ENCODE measurements at regions of chr1 and their contacts with region 1.

Region 1: DNA sequence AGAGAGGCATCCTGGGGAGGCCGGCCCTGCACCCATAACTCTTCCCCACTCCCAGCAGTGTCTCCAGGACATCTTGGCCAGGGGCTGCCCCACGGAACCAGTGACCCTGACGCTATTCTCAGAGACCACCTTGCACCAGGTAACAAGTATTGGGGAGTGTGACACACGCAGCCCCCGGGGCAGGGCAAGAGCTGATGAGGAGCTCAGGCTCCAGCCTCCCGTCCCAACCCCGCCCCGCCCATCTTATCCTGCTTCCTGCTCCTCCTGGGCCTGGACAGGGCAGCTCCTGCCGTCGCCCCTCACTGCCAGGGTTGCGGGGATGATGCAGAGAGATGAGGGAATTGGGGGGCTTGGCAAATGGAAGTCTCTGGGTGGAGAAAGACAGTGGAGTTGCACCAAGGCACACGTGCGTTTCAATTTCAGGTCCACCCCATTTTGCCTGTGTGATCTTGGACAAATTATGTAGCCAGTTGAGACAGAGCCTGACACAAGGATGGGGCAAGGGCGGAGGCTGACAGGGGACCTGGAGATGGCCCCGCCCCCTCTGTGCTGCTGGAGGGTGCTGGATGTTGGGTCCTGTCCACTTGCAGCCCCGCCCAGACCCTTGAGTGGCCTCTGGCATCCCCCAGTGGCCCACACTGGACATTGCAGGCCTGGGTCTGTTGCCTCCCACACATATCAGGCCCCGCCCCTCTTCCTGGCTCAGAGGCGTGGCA is 10.7 kb downstream of the CLCNKA start:
- DNase-seq: peak; percentile 86
- H3K4me3 ChIP-seq: no peak overlapping the region
- H3K4me3 Mint-ChIP-seq: no peak overlapping the region
- H3K27ac Mint-ChIP-seq: no peak overlapping the region
- H3K4me1 ChIP-seq: no peaks in the 10 kb centered on the region
- H3K4me1 Mint-ChIP-seq: no peaks in the 10 kb centered on the region
- H3K27me3 ChIP-seq: no peaks in the 10 kb centered on the region
- H3K27me3 Mint-ChIP-seq: no peaks in the 10 kb centered on the region
- CTCF ChIP-seq: peak; percentile 69 to 78

Region 2: GRCh38 chr1:16009030-16009709 is 23.4 kb before region 1 on chr1:
- CTCF ChIA-PET with region 1: interaction called, 3 read pairs
- POLR2A ChIA-PET with region 1: no interaction called
- intact Hi-C with region 1: loop called (anchors 2 kb)
- DNase-seq: peak; percentile 77 to 82
- H3K4me3 ChIP-seq: no peak overlapping the region
- H3K4me3 Mint-ChIP-seq: no peak overlapping the region
- H3K27ac Mint-ChIP-seq: no peak overlapping the region
- H3K4me1 ChIP-seq: no peaks in the 10 kb centered on the region
- H3K4me1 Mint-ChIP-seq: no peaks in the 10 kb centered on the region
- H3K27me3 ChIP-seq: no peaks in the 10 kb centered on the region
- H3K27me3 Mint-ChIP-seq: no peaks in the 10 kb centered on the region
- CTCF ChIP-seq: peak; percentile 87 to 91

Region 3: DNA sequence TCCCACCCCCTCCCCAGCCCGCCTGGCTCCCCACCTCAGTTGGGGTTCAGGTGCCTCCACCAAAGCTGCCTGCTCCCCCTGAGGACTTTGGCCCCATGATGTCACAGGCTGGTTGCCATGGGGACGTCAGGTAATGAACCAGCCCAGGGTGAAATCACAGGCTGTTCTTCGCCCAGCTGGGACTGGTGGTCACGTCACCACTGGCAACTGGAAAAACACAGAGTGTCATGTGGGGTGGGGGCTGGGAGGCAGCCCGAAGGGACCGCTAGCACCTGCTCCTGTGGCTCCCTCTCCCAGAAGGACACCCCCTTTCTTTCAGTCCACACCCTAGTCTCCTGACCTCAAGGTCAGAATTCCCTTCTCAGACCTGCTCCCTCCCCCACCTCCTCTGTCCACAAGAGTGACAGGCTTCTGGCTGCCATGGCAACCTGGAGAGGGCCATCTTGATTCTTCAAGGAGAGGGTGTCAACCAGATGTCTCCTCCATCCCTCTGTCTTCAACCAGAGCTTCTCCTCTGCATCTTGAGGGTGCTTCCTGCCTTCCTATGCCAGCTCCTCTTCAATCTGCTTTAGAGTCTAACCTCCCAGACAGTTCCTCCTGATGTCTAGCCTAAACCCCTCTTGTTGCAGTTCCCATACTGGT is 34.7 kb after region 1 on chr1:
- CTCF ChIA-PET with region 1: no interaction called
- POLR2A ChIA-PET with region 1: no interaction called
- intact Hi-C with region 1: loop called (anchors 1 kb)
- DNase-seq: peak; percentile 64 to 66
- H3K4me3 ChIP-seq: no peak overlapping the region
- H3K4me3 Mint-ChIP-seq: no peak overlapping the region
- H3K27ac Mint-ChIP-seq: peak overlapping the region; percentile 55
- H3K4me1 ChIP-seq: peaks cover 11% of the 10 kb centered on the region
- H3K4me1 Mint-ChIP-seq: no peaks in the 10 kb centered on the region
- H3K27me3 ChIP-seq: no peaks in the 10 kb centered on the region
- H3K27me3 Mint-ChIP-seq: no peaks in the 10 kb centered on the region
- CTCF ChIP-seq: no peak